Left cardiac atrium (tissue), 4 donors: ENCODE measurements at regions of chr3 and their contacts with region 1.

Region 1: DNA sequence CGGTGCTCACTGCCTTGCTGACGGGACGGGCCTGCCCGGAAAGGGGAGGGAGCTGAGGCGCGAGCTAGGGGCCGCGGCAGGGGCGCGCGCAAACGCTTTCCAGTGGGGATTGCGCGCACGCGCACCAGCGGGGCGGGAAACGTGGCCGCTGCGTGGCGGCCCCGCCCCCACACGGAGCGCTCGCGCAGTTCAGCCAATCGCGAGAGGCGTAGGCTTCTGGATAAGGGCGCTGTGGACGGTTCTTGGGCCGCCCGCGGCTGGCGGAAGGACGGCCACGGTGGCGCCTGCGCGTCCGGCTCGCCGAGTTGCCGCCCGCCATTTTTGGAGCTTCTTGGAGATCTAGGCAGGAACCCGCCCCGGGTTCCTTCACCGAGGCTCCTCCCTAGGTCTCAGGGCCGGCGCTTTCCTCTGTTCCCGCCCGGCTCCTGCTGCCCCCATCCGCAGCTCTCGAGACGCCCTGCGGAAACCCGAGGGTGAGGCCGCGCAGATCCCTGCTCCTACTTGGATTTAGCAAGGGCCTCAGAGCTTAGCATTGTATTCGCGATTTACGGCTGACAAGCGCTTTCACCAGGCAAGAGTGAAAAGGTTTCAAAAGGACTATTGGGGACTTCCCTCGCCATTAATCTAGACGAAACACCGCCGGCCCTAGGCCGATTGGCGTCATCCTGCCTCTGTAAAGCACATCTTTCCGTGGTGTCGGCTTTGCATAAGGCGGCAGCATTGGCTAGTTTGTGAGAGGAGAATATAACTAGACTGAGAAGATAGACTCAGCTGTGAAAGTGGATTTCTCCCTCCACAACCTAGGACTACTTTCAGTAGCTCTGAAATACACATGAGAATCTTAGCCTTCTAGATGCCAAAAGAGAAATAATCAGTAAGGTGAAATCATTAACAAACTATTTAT is 496 bp upstream of the STAG1 start:
- DNase-seq: peak; percentile 99
- ATAC-seq: peak; percentile 93 to 96

Region 2: DNA sequence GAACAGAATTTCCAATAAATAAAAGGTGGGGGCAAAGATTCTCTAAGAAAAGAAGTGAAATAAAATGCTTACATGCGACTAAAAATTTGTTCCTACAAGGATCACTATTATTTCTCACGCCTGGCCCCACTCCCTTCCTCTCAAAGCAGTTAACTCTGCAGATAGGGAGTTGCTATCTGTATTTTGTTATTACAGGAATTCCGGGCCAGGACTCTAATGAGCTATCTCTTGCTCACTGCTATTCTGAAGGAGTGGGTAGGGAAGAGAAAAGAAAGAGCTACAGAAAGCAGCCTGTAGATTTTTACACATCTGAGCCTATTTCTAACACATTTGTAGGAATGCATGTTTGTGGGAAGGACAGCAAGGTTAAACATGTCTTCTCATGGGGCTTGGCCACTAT is 362.1 kb before region 1 on chr3:
- intact Hi-C with region 1: loop called in 1 of 2 experiments (anchors 5 kb)
- DNase-seq: no peak
- ATAC-seq: peak; percentile 47 to 87

Region 3: DNA sequence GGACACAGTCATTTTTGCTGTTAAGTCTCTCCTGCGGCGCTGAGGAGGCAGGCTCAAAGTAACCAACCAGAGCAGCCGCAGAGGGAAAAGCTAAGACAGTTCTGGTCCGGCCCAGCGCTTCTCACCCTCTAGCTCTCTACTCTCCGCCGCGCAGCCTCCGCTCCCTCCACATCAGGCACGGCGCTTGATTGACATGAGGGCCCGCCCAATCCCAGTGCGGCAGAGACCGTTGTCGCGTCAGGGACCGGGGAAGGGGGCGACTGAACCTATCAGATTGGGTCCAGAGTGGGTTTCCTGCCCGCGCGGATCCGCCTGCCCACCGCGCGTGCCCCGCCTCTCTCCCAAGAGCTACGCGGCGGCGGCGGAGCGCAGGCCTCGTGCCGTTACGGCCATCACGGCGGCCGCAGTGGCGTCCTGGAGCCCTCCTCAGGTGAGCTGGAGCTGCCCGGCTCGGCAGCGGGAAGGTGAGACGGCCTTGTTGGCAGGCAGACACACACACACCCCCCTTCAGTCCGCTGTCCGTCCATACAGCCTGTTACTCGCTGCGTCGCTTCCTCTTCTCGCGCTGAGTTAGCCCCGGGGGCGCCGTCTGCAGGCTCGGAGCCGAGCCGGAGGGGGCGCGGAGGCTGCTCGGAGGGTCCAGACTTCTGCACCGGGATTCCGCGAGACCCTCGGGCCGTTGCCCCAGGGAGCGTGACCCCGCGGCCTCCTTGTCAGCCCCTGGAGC is 109.4 kb after region 1 on chr3 and contains the start of gene NCK1:
- intact Hi-C with region 1: loop called in 1 of 2 experiments (anchors 10 kb)
- DNase-seq: peak; percentile 99
- ATAC-seq: peak; percentile 99
- total RNA-seq, gene NCK1: 29.5 to 29.9 TPM